Activated naive CD4-positive, alpha-beta T cell treated with anti-CD3 and anti-CD28 coated beads for 36 hours (primary cell): ENCODE measurements at regions of chr19 and their contacts with region 1.

Region 1: DNA sequence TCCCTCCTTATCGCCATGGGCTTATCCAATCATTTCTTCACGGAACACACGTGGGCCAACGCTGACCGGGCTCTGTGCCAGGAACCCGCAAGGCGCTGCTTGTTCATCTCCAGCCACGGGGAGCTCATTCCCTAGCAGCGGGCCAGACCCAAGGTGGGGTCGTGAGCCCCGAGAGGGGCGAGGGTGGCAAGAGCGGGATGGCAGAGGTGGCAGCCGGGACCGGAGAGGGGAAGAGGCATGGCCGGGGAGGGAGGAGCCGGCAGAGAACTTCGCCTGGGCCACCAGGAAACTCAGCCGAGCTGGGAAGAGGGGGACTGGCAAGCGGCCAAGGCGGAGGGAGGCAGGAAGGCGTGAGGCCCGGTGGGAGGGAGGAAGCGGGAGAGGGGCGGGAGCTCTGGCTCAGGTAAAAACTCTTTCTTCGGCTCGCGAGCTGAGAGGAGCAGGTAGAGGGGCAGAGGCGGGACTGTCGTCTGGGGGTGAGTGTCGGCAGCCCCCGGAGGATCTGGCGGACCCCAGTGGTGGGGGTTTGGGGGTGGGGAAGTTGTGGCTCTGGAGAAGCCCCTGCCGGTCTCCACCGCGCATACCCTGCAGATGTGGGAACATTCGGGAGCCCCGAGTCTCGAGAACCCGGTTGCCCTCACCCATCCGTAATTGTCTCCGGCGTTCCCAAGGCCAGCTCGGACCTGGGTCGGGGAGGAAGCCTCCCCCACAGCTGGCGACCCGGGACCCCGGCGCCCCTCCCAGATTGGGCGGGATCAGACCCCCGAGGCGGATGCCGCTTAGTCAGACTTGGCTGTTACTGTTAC is at the start of gene B3GNT3:
- DNase-seq: no peak
- H3K4me3 Mint-ChIP-seq: peak within 1 kb of the TSS; percentile 21
- H3K27ac Mint-ChIP-seq: no peak within 1 kb of the TSS
- H3K4me1 Mint-ChIP-seq: peaks cover 57% of the 10 kb centered on the region
- H3K27me3 Mint-ChIP-seq: no peaks in the 10 kb centered on the region
- total RNA-seq, gene B3GNT3: 0.17 to 0.19 TPM

Region 2: DNA sequence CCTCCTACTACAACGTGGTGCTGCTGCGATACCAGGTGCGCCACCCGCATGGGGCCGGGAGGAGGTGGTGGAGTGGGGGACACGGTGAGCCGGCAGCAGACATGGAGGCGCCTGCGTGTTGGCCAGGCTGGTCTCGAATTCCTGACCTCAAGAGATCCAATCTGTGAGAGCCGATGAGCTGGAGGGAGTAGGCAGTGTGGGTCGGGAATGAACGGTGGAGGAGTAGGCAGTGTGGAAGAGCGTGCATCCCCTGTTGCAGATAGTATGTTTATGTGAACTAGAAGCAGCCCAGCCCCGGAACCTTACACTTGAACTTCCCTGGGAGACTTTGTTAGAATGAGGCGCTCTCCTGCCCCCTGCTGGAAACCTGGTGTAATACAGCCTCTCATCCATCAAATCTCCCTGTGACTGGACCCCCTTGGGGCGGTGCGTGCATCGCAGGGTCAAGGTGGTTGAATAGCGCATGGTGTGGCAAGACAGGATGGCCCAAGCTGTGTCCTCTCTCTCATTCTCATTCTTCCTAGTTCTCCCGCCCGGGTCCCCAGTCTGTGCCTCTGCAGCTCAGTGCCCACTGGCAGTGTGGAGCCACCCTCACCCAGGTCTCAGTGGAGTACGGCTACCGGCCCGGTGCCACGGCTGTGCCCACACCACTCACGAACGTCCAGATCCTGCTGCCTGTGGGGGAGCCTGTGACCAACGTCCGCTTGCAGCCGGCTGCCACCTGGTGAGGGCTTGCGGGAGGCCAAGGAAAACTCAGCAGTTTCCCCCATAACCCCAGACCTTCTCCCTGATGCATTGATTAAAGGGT is 10.5 kb before region 1 on chr19:
- CTCF ChIA-PET with region 1: interaction called, 13 read pairs
- intact Hi-C with region 1: no loop called
- DNase-seq: peak; percentile 88
- H3K4me3 Mint-ChIP-seq: no peak overlapping the region
- H3K27ac Mint-ChIP-seq: no peak overlapping the region
- H3K4me1 Mint-ChIP-seq: peaks cover 12% of the 10 kb centered on the region
- H3K27me3 Mint-ChIP-seq: no peaks in the 10 kb centered on the region

Region 3: GRCh38 chr19:17847538-17848366 is 52.8 kb after region 1 on chr19 and contains the start of gene JAK3:
- CTCF ChIA-PET with region 1: interaction called, 3 read pairs
- intact Hi-C with region 1: loop called (anchors 2 kb)
- DNase-seq: peak; percentile 97
- H3K4me3 Mint-ChIP-seq: peak within 1 kb of the TSS; percentile 94
- H3K27ac Mint-ChIP-seq: peak within 1 kb of the TSS; percentile 94
- H3K4me1 Mint-ChIP-seq: peaks cover 70% of the 10 kb centered on the region
- H3K27me3 Mint-ChIP-seq: no peaks in the 10 kb centered on the region
- total RNA-seq, gene JAK3: 231 to 235 TPM